Ovary (tissue), 10 donors: ENCODE measurements at regions of chr9 and their contacts with region 1.

Region 1: DNA sequence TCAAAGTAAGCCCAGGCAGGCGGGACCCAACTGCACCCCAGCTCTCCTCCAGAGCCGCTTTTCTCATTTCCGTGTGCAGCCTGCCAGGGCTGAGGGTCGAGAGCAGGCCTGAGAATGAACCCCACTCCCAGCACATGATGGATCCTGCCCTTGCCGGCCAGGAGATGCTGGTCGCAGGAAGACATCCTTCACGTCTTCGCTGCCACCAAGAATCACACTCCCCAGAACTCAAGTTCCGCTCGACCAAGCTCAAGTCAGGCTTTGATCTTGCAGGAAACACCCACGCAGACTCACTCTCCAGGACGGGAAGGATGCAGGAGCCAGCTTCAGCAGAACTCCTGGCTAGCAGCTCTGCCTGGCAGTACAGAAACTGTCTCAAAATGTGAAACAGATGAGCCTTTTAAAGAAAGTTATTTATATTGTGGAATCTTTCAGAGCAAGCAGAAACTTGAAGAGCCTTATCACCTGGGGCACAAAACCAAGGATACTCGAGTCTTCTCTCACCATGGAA is 102.4 kb downstream of the ROR2 start:
- DNase-seq: peak; percentile 52 to 73 (median 63)
- H3K4me3 ChIP-seq: no peak overlapping the region
- H3K27ac ChIP-seq: peak overlapping the region in 1 of 2 donors; percentile 15
- H3K4me1 ChIP-seq: peaks cover 15% of the 10 kb centered on the region
- H3K27me3 ChIP-seq: no peaks in the 10 kb centered on the region
- CTCF ChIP-seq: no peak
- EP300 ChIP-seq: no peak
- POLR2A ChIP-seq: no peak

Region 2: DNA sequence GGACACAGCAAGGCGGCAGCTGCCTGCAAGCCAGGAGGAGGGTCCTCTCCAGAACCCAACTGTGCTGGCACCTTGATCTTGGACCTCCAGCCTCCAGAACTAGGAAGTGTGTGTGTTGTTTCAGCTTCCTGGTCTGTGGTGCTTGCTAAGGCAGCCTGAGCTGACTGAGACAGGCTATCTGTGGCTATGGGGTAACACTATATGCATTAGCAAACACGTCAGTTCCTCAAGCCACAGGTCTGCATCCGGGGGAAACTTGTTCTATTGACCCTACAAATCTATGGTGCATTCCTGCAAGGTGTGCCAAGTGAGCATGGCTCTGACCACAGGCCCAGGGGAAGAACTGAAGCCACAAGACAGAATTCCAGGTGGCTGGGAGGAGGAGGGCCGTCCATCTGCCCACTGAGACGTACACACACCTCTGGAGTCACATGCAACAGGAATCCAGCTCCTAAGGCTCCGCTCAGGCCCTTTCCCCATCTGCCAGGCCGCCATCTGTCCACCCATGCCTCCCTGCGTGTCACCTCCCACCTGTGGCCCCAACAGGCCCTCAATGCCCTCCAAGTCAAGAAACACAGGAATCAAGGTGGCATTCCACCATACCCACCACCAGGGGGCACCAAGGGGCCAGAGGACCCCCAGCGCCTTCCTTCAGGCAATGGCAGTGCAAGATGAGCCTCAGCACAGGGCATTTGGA is 72.5 kb before region 1 on chr9:
- intact Hi-C with region 1: loop called in 1 of 4 experiments (anchors 5 kb)
- DNase-seq: peak; percentile 62 to 80 (median 79)
- H3K4me3 ChIP-seq: no peak overlapping the region
- H3K27ac ChIP-seq: no peak overlapping the region
- H3K4me1 ChIP-seq: peaks cover 3% of the 10 kb centered on the region
- H3K27me3 ChIP-seq: no peaks in the 10 kb centered on the region
- CTCF ChIP-seq: peak; percentile 71 to 87 (median 81)
- EP300 ChIP-seq: no peak
- POLR2A ChIP-seq: no peak

Region 3: GRCh38 chr9:92276331-92277032 is 428.8 kb after region 1 on chr9:
- intact Hi-C with region 1: no loop called
- DNase-seq: no peak
- H3K4me3 ChIP-seq: no peak overlapping the region
- H3K27ac ChIP-seq: no peak overlapping the region
- H3K4me1 ChIP-seq: no peaks in the 10 kb centered on the region
- H3K27me3 ChIP-seq: no peaks in the 10 kb centered on the region
- CTCF ChIP-seq: no peak
- EP300 ChIP-seq: no peak
- POLR2A ChIP-seq: no peak